CD4-positive, alpha-beta memory T cell (primary cell): ENCODE measurements at regions of chr1 and their contacts with region 1.

Region 1: DNA sequence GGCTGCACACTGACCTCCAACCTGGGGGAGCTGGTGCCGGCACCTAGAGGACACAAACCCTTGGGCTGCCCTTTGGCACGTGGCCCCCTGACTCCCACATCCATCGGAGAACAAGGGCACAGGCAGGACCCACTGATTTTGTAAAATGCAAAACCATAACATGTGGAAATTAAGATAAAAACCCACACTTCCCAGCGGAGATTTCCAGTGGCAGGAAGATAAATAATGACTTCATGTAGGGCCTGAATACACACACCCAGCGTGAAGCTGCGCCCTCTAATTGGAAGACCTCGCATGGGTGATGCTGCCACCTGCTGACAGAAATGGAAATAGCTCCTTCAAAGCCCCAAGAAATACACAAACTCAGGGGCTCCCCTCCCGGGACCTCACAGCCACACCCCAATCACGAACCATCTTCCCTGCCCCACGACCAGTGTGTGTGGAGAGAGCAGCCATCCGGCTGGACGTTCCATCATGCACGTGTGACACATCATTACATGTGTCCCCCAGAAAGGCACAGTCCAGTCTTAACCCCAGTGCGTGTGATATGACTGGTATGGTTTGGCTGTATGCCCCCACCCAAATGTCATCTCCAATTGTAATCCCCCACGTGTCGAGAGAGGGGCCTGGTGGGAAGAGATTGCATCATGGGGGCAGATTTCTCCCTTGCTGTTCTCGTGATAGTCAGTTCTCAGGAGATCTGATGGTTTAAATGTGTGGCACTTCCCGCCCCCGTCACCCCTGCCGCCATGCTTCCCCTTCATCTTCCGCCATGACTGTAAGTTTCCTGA is 5.7 kb upstream of the TPRG1L start:
- DNase-seq: peak; percentile 74 to 81 (median 78)
- H3K4me3 ChIP-seq: no peak overlapping the region
- H3K4me3 Mint-ChIP-seq: no peak overlapping the region
- H3K27ac ChIP-seq: no peak overlapping the region
- H3K27ac Mint-ChIP-seq: peak overlapping the region in 2 of 7 donors; percentile 53 to 60
- H3K4me1 ChIP-seq: peaks cover 27% of the 10 kb centered on the region
- H3K4me1 Mint-ChIP-seq: peaks cover 20 to 40% (median 34%) of the 10 kb centered on the region in 4 donors
- H3K27me3 ChIP-seq: no peaks in the 10 kb centered on the region
- H3K27me3 Mint-ChIP-seq: peaks cover 0 to 1% of the 10 kb centered on the region in 2 donors

Region 2: DNA sequence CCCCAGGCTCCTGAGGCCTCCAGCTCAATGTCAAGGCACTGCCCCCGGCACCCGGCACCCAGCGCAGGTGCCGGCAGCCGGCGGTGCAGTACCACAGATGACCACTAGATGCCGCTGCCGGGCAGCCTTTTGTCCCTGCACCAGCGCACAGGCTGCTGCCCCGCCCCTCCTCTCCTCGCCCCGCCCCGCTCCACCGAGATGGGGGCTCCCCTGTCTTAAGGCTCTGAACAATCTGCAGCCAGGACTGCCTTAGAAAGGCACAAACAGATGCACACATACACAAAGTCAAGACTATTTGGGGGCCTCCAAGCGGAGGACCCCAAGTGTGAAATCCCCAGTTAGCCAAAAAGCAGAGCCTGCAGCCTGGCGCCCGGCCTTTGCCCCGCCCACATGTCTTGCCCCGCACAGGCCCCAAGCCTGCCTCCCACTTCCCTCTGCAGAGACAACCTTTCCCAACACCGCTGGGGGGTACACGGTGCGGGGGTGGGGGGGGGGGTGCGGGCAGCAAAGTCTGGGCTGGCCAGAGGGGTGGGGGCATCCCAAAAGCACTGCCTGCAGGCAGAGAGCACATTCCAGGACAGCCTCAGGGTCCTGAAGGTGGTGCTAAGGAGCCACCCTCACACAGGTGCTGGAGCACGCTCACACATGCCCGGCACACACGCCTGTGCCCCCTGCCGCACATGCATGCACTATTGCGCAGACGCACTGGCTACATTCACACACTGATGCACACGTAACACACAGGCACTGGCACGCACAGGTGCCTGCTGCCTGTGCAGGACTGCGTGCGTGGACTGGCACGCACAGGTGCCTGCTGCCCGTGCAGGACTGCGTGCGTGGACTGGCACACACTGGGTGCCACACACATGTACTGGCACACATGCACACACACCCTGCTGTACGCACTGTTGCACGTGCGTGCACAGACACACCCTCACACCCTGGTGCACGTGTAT is 127.5 kb before region 1 on chr1:
- CTCF ChIA-PET with region 1: interaction called, 24 read pairs
- POLR2A ChIA-PET with region 1: interaction called, 6 read pairs
- intact Hi-C with region 1: loop called (anchors 1 kb)
- DNase-seq: peak; percentile 76 to 83 (median 78)
- H3K4me3 ChIP-seq: no peak overlapping the region
- H3K4me3 Mint-ChIP-seq: peak overlapping the region in 5 of 8 donors; percentile 9 to 70 (median 52)
- H3K27ac ChIP-seq: no peak overlapping the region
- H3K27ac Mint-ChIP-seq: peak overlapping the region in 4 of 7 donors; percentile 4 to 50 (median 30)
- H3K4me1 ChIP-seq: no peaks in the 10 kb centered on the region
- H3K4me1 Mint-ChIP-seq: peaks cover 3 to 8% (median 6%) of the 10 kb centered on the region in 4 donors
- H3K27me3 ChIP-seq: no peaks in the 10 kb centered on the region
- H3K27me3 Mint-ChIP-seq: no peaks in the 10 kb centered on the region

Region 3: GRCh38 chr1:3530926-3531818 is 87.9 kb before region 1 on chr1:
- CTCF ChIA-PET with region 1: interaction called, 10 read pairs
- POLR2A ChIA-PET with region 1: interaction called, 13 read pairs
- intact Hi-C with region 1: loop called (anchors 1 kb)
- DNase-seq: peak; percentile 77 to 84 (median 81)
- H3K4me3 ChIP-seq: peak overlapping the region; percentile 54 to 85
- H3K4me3 Mint-ChIP-seq: peak overlapping the region; percentile 82 to 94 (median 88)
- H3K27ac ChIP-seq: peak overlapping the region; percentile 54
- H3K27ac Mint-ChIP-seq: peak overlapping the region; percentile 54 to 99 (median 97)
- H3K4me1 ChIP-seq: peaks cover 16% of the 10 kb centered on the region
- H3K4me1 Mint-ChIP-seq: peaks cover 4 to 36% (median 18%) of the 10 kb centered on the region in 4 donors
- H3K27me3 ChIP-seq: no peaks in the 10 kb centered on the region
- H3K27me3 Mint-ChIP-seq: no peaks in the 10 kb centered on the region

Region 4: DNA sequence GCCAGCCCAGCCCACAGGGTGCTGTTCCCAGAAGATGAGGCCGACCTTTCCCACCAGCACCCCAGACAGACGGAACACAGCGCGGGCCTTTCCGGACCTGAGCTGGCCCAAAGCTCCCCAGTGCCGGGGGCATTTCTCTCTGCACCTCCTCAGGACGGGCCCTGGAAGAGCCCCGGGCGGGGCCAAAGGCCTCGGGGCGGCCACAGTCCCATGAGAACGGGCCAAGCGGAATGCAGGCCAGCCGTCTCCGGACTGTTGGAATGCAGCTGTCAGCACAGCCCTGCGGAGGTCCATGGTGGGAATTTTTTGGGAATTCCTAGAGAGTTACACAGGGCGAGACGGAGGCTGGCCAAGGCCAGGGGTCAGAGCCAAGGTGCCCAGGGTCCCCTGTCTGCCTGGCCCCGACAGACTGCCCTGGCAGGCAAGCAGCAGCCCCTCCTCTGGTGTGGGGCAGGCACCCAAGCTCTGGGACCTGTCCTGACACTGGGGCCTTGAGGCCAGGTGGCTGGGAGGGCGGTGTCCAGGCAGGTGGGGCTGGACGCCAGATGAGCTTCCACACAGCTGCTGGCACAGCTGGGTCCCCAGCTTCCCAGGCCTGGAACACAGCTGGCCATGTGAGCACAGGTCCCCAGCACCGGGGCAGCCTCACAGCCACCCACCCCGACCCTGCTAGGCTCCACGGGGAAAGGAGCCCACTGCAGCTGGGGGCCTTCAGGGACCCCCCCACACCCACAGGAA is 70.8 kb before region 1 on chr1:
- CTCF ChIA-PET with region 1: no interaction called
- POLR2A ChIA-PET with region 1: no interaction called
- intact Hi-C with region 1: no loop called
- DNase-seq: no peak
- H3K4me3 ChIP-seq: no peak overlapping the region
- H3K4me3 Mint-ChIP-seq: no peak overlapping the region
- H3K27ac ChIP-seq: no peak overlapping the region
- H3K27ac Mint-ChIP-seq: no peak overlapping the region
- H3K4me1 ChIP-seq: no peaks in the 10 kb centered on the region
- H3K4me1 Mint-ChIP-seq: no peaks in the 10 kb centered on the region
- H3K27me3 ChIP-seq: no peaks in the 10 kb centered on the region
- H3K27me3 Mint-ChIP-seq: no peaks in the 10 kb centered on the region

Region 5: DNA sequence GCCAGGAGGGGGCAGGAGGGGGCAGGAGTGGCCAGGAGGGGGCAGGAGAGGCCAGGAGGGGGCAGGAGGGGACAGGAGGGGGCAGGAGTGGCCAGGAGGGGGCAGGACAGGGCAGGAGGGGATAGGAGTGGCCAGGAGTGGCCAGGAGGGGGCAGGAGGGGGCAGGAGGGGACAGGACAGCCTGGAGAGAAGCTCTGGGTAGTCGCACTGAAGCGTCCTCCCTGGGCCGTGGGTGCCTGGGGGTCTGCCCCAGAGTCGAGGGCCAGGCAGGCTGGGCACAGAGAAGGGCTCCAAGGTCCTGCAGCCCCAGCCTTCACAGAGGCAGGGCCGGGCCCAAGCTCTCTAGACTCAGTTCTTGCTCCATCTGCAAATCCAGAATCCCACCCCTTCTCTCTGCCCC is 30.7 kb before region 1 on chr1:
- CTCF ChIA-PET with region 1: interaction called, 3 read pairs
- POLR2A ChIA-PET with region 1: no interaction called
- intact Hi-C with region 1: loop called (anchors 2 kb)
- DNase-seq: no peak
- H3K4me3 ChIP-seq: no peak overlapping the region
- H3K4me3 Mint-ChIP-seq: no peak overlapping the region
- H3K27ac ChIP-seq: no peak overlapping the region
- H3K27ac Mint-ChIP-seq: no peak overlapping the region
- H3K4me1 ChIP-seq: no peaks in the 10 kb centered on the region
- H3K4me1 Mint-ChIP-seq: no peaks in the 10 kb centered on the region
- H3K27me3 ChIP-seq: no peaks in the 10 kb centered on the region
- H3K27me3 Mint-ChIP-seq: no peaks in the 10 kb centered on the region

Region 6: GRCh38 chr1:3656450-3657095 is 37.5 kb after region 1 on chr1:
- CTCF ChIA-PET with region 1: no interaction called
- POLR2A ChIA-PET with region 1: no interaction called
- intact Hi-C with region 1: no loop called
- DNase-seq: no peak
- H3K4me3 ChIP-seq: no peak overlapping the region
- H3K4me3 Mint-ChIP-seq: no peak overlapping the region
- H3K27ac ChIP-seq: no peak overlapping the region
- H3K27ac Mint-ChIP-seq: no peak overlapping the region
- H3K4me1 ChIP-seq: peaks cover 3% of the 10 kb centered on the region
- H3K4me1 Mint-ChIP-seq: peaks cover 0 to 6% (median under 1%) of the 10 kb centered on the region in 4 donors
- H3K27me3 ChIP-seq: peaks cover 3% of the 10 kb centered on the region
- H3K27me3 Mint-ChIP-seq: peaks cover 30 to 33% of the 10 kb centered on the region in 2 donors

Region 7: DNA sequence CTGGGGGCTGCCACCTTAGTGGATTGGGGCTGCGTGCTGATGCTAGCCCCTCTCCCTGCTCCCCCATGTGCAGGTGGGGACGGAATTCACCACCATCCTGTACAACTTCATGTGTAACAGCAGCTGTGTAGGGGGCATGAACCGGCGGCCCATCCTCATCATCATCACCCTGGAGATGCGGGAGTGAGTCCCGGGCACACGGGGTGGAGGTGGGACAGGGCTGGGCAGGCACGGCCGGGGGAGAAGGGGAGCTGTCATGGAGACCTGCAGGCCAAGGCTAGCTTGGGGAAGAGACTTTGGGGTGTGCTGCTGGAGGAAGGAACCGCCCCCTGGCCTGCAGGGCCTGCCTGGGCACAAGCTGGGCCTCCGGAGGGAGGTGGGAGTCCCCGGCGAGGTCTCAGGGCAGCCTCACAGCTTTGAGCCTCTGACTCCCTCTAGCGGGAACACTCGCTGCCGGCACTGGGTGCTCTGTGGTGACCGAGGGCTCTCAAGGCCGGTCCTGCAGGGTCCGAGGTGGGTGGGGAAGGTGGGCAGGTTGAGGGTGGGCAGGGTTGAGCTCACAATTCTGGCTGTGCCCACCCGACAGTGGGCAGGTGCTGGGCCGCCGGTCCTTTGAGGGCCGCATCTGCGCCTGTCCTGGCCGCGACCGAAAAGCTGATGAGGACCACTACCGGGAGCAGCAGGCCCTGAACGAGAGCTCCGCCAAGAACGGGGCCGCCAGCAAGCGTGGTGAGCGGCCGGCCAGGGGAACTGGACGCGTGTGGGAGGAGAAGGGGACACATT is 108.2 kb after region 1 on chr1:
- CTCF ChIA-PET with region 1: interaction called, 5 read pairs
- POLR2A ChIA-PET with region 1: no interaction called
- intact Hi-C with region 1: loop called (anchors 1 kb)
- DNase-seq: no peak
- H3K4me3 ChIP-seq: no peak overlapping the region
- H3K4me3 Mint-ChIP-seq: no peak overlapping the region
- H3K27ac ChIP-seq: no peak overlapping the region
- H3K27ac Mint-ChIP-seq: no peak overlapping the region
- H3K4me1 ChIP-seq: no peaks in the 10 kb centered on the region
- H3K4me1 Mint-ChIP-seq: peaks cover 0 to 4% (median 0%) of the 10 kb centered on the region in 4 donors
- H3K27me3 ChIP-seq: no peaks in the 10 kb centered on the region
- H3K27me3 Mint-ChIP-seq: peaks cover 1 to 8% of the 10 kb centered on the region in 2 donors